ENCODE measurements at regions of chr6 and their contacts with region 1.

Region 1: DNA sequence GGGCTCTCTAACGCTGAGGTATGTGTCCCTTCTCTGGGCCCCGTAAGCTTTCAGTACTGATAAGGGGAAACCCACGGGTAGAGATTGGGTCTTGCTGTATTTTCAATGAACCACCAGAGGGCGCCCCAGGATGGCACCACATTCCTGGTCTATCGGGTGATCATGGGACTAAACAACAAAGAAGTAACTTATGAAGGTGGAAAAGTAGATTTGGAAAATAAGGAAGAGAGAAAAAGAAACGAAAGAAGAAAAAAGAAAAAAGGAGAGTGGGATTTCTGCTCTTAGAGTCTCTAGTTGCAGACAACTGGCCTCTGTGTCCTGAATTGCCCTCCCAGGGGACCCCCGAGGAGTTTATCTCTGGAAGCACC is 93.8 kb downstream of the GMPR start:
- DNase-seq: peak; percentile 78
- ATAC-seq: peak; percentile 99
- H3K4me3 ChIP-seq: no peak overlapping the region
- H3K27ac ChIP-seq: peak overlapping the region; percentile 13; the same call in 1 of the 2 replicates
- H3K4me1 ChIP-seq: peaks cover 19% of the 10 kb centered on the region
- H3K27me3 ChIP-seq: no peaks in the 10 kb centered on the region
- CTCF ChIP-seq: peak; percentile 77 to 95 (median 94); a peak in 5 of 6 replicates
- EP300 ChIP-seq: no peak
- POLR2A ChIP-seq: no peak
- RAD21 ChIP-seq: peak; percentile 99

Region 2: GRCh38 chr6:16216501-16217155 is 115.5 kb before region 1 on chr6:
- CTCF ChIA-PET with region 1: no interaction called
- POLR2A ChIA-PET with region 1: no interaction called
- RAD21 ChIA-PET with region 1: no interaction called
- SMC1A ChIA-PET with region 1: no interaction called
- in situ Hi-C with region 1: no loop called
- intact Hi-C with region 1: no loop called
- DNase-seq: no peak
- ATAC-seq: no peak
- H3K4me3 ChIP-seq: no peak overlapping the region
- H3K27ac ChIP-seq: no peak overlapping the region
- H3K4me1 ChIP-seq: peaks cover 5% of the 10 kb centered on the region
- H3K27me3 ChIP-seq: no peaks in the 10 kb centered on the region; a peak in 1 of 4 replicates
- CTCF ChIP-seq: no peak
- EP300 ChIP-seq: no peak
- POLR2A ChIP-seq: no peak
- RAD21 ChIP-seq: no peak

Region 3: DNA sequence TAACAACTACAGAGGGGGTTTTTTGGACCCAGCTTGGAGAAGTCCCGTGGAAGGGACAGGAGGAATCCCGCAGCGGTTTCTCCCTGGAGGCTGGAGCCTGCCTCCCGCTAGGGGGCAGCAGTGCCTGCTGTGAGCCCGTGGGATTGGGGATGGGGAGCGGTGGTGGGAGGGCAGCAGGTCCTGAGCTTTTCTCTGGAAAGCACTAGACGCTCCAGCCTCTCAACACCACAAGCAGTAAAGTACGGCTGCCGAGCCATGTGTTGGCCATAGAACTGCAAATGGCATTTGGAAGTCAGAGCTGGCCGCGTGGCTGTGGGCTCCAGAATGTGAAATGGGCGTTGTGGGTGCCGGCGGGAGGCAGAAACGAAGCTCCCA is 46.0 kb before region 1 on chr6:
- CTCF ChIA-PET with region 1: interaction called, 88 read pairs
- POLR2A ChIA-PET with region 1: interaction called, 3 read pairs
- RAD21 ChIA-PET with region 1: interaction called, 40 read pairs
- SMC1A ChIA-PET with region 1: interaction called, 36 read pairs
- in situ Hi-C with region 1: no loop called
- intact Hi-C with region 1: loop called (anchors 1 kb)
- DNase-seq: no peak
- ATAC-seq: peak; percentile 82
- H3K4me3 ChIP-seq: no peak overlapping the region
- H3K27ac ChIP-seq: no peak overlapping the region
- H3K4me1 ChIP-seq: no peaks in the 10 kb centered on the region
- H3K27me3 ChIP-seq: no peaks in the 10 kb centered on the region
- CTCF ChIP-seq: peak; percentile 79 to 95 (median 84)
- EP300 ChIP-seq: no peak
- POLR2A ChIP-seq: no peak
- RAD21 ChIP-seq: peak; percentile 90

Region 4: DNA sequence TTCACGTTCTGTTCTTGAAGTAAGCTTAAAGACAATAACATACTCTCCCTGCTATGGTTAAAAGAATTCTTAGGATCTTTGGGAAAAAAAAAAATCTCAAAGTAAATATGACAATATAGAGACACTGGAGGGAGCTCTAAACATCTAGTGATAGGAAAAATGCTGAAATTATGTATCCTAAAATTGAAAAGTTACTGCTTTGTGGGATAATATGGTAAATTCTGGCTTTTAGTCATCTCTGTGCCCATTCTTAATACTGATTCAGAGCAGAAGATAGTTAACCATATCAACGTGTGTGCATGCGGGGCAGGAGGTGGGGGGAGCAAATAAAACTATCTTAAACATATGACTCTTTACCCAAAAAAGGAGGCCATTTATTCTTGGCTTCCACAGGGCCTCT is 71.7 kb after region 1 on chr6:
- CTCF ChIA-PET with region 1: interaction called, 21 read pairs
- POLR2A ChIA-PET with region 1: no interaction called
- RAD21 ChIA-PET with region 1: interaction called, 12 read pairs
- SMC1A ChIA-PET with region 1: interaction called, 21 read pairs
- in situ Hi-C with region 1: no loop called
- intact Hi-C with region 1: loop called (anchors 2 kb)
- DNase-seq: no peak
- ATAC-seq: no peak
- H3K4me3 ChIP-seq: no peak overlapping the region
- H3K27ac ChIP-seq: no peak overlapping the region
- H3K4me1 ChIP-seq: peaks cover 4% of the 10 kb centered on the region; the same call in 1 of the 2 replicates
- H3K27me3 ChIP-seq: no peaks in the 10 kb centered on the region
- CTCF ChIP-seq: no peak; a peak in 1 of 6 replicates
- EP300 ChIP-seq: no peak
- POLR2A ChIP-seq: no peak
- RAD21 ChIP-seq: peak; percentile 21; the same call in 1 of the 2 replicates

Region 5: DNA sequence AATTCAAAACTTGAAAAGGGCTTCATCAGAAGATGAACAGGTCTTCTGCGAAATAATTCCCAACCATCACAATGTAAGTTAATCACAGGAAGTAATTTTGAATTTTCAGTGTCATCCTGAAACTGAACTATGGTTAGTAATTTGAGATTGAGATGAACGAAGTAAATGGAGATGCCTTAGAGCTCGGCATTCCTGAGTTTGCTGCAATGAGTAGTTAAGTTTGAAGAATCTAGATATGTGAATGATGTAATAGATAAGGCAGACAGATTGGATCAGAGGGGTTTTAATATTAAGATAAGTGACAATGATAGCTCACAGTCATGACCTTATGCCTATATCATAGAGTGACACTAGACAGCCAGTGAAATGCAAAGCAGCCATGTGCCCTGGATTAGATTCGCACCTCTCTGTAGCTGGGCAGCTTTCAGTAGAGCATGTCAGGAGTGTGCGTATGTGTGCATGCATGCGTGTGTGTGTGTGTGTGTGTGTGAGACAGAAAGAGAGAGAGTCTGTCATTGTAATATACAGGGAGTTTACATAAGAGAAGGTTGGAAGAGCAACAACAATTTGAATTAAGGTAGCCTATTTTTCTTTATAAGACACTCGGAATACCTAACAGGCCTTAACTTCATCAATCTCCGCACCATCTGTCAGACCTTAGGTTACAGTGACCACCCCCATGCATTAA is 139.2 kb after region 1 on chr6:
- CTCF ChIA-PET with region 1: interaction called, 13 read pairs
- POLR2A ChIA-PET with region 1: no interaction called
- RAD21 ChIA-PET with region 1: interaction called, 14 read pairs
- SMC1A ChIA-PET with region 1: interaction called, 27 read pairs
- in situ Hi-C with region 1: no loop called
- intact Hi-C with region 1: loop called (anchors 1 kb)
- DNase-seq: peak; percentile 76
- ATAC-seq: peak; percentile 71
- H3K4me3 ChIP-seq: 0 out of 2 replicates have a peak overlapping the region, but pooled peaks have one; percentile 9
- H3K27ac ChIP-seq: peak overlapping the region; percentile 90
- H3K4me1 ChIP-seq: peaks cover 71% of the 10 kb centered on the region
- H3K27me3 ChIP-seq: no peaks in the 10 kb centered on the region
- CTCF ChIP-seq: no peak
- EP300 ChIP-seq: peak; percentile 74 to 81; a peak in 3 of 4 replicates
- POLR2A ChIP-seq: peak; percentile 47; the same call in 1 of the 2 replicates
- RAD21 ChIP-seq: no peak

Region 6: GRCh38 chr6:16712931-16713484 is 380.8 kb after region 1 on chr6:
- CTCF ChIA-PET with region 1: interaction called, 13 read pairs
- POLR2A ChIA-PET with region 1: no interaction called
- RAD21 ChIA-PET with region 1: no interaction called
- SMC1A ChIA-PET with region 1: interaction called, 8 read pairs
- in situ Hi-C with region 1: no loop called
- intact Hi-C with region 1: no loop called
- DNase-seq: no peak
- ATAC-seq: peak; percentile 71
- H3K4me3 ChIP-seq: no peak overlapping the region
- H3K27ac ChIP-seq: peak overlapping the region; percentile 40; the same call in 1 of the 2 replicates
- H3K4me1 ChIP-seq: peaks cover 18% of the 10 kb centered on the region
- H3K27me3 ChIP-seq: no peaks in the 10 kb centered on the region
- CTCF ChIP-seq: peak; percentile 25 to 56 (median 50)
- EP300 ChIP-seq: peak in 1 of 2 experiments; percentile 66; a peak in 1 of 4 replicates
- POLR2A ChIP-seq: no peak
- RAD21 ChIP-seq: peak; percentile 50

Region 7: GRCh38 chr6:17086469-17086868 is 754.3 kb after region 1 on chr6:
- CTCF ChIA-PET with region 1: interaction called, 3 read pairs
- POLR2A ChIA-PET with region 1: no interaction called
- RAD21 ChIA-PET with region 1: interaction called, 3 read pairs
- SMC1A ChIA-PET with region 1: no interaction called
- in situ Hi-C with region 1: no loop called
- intact Hi-C with region 1: loop called (anchors 5 kb)
- DNase-seq: no peak
- ATAC-seq: peak; percentile 81
- H3K4me3 ChIP-seq: no peak overlapping the region
- H3K27ac ChIP-seq: no peak overlapping the region
- H3K4me1 ChIP-seq: no peaks in the 10 kb centered on the region
- H3K27me3 ChIP-seq: no peaks in the 10 kb centered on the region
- CTCF ChIP-seq: peak; percentile 46 to 56 (median 52)
- EP300 ChIP-seq: no peak
- POLR2A ChIP-seq: no peak
- RAD21 ChIP-seq: peak; percentile 63

Measured in GM12878 (cell line).